Body of pancreas (tissue), 4 donors: ENCODE measurements at regions of chr7 and their contacts with region 1.

Region 1: GRCh38 chr7:26365077-26365900 is 73.6 kb downstream of the SNX10 start:
- DNase-seq: peak; percentile 47 to 78 (median 56)
- ATAC-seq: peak; percentile 72
- H3K4me3 ChIP-seq: no peak overlapping the region
- H3K27ac ChIP-seq: peak overlapping the region; percentile 34 to 82 (median 56)
- H3K4me1 ChIP-seq: peaks cover 47% of the 10 kb centered on the region
- H3K27me3 ChIP-seq: no peaks in the 10 kb centered on the region
- CTCF ChIP-seq: peak; percentile 43 to 96 (median 93)
- POLR2A ChIP-seq: no peak

Region 2: DNA sequence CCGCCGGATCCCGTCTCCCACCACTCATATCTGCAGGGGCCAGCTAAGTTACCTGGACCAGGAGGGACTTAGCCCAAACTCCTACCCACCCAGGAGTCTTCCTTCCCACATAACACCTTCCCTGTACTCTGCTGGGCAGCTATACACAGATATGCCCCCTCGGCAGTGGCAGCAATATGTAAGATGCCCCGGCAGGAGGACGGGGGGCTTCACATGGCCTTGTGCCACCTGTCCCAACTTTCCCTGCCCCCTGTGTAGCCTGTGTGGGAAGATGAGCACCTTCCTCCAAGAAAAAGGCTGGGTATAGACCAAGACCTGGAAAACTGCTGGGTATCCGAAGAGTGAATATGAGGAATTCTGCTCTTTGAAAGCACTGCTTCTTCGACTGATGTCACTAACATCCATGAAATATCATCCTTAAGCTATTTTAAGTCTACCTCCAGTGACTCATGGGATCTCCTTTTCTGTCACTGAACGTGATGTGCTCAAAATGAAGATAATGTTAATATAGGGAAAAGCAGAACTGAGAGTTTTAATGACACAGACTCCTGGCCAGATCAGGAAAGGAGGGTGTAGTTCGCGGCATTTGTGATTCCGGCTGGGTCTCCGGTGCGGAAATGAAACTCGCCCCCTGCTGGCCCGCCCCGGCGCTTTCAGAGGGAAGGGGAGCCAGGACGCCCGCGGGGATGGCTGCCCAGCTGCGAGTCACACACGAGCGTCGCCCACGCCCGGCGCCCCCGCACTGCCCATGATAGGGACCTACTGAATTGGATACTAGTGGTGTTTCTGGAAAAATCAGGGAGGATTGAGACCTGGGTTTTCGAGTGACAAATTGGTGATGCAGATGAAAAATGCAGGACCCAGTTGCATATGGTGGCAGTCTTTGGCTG is 470.1 kb before region 1 on chr7:
- intact Hi-C with region 1: loop called (anchors 5 kb)
- DNase-seq: peak; percentile 72 to 83 (median 78)
- ATAC-seq: peak; percentile 76
- H3K4me3 ChIP-seq: no peak overlapping the region
- H3K27ac ChIP-seq: peak overlapping the region; percentile 29 to 60 (median 40)
- H3K4me1 ChIP-seq: peaks cover 42% of the 10 kb centered on the region
- H3K27me3 ChIP-seq: no peaks in the 10 kb centered on the region
- CTCF ChIP-seq: peak; percentile 57 to 78 (median 71)
- POLR2A ChIP-seq: peak in 2 of 3 donors; percentile 26 to 52

Region 3: DNA sequence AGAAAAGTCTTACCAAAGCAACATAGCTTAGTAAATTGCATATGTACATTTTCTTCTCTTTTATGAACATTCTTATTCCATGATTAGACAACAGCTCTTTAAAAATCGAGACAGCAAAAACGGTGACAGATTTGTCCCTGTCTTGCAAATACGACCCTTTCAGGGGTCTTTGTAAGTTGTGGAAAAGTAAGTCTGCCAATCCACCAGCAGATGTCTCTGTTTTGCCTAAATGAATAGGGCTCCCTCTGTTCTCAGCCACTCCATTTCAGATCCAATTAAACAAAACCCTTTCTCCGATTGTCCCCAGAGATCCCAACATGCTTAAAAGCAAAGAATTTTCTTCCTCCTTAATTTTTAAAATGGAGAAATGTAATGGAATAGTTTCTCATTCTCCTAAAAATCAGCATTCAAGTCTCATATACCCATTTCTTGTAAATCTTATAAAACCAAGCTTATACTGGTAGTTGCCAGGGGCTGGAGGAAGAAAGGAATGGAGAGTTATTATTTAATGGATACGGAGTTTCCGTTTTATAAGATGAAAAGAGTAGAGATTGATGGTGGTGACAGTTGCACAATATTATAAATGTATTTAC is 274.3 kb before region 1 on chr7:
- intact Hi-C with region 1: loop called (anchors 10 kb)
- DNase-seq: peak in 1 of 4 donors; percentile 32
- ATAC-seq: peak; percentile 68
- H3K4me3 ChIP-seq: no peak overlapping the region
- H3K27ac ChIP-seq: no peak overlapping the region
- H3K4me1 ChIP-seq: peaks cover 8% of the 10 kb centered on the region
- H3K27me3 ChIP-seq: no peaks in the 10 kb centered on the region
- CTCF ChIP-seq: peak; percentile 25 to 82 (median 63)
- POLR2A ChIP-seq: no peak

Region 4: GRCh38 chr7:26156454-26157365 is 208.6 kb before region 1 on chr7:
- intact Hi-C with region 1: no loop called
- DNase-seq: no peak
- ATAC-seq: peak; percentile 39
- H3K4me3 ChIP-seq: no peak overlapping the region
- H3K27ac ChIP-seq: peak overlapping the region; percentile 7 to 76 (median 62)
- H3K4me1 ChIP-seq: peaks cover 42% of the 10 kb centered on the region
- H3K27me3 ChIP-seq: no peaks in the 10 kb centered on the region
- CTCF ChIP-seq: no peak
- POLR2A ChIP-seq: no peak

Region 5: GRCh38 chr7:26667500-26668133 is 302.3 kb after region 1 on chr7:
- intact Hi-C with region 1: loop called (anchors 5 kb)
- DNase-seq: peak; percentile 72 to 90 (median 80)
- ATAC-seq: peak; percentile 92
- H3K4me3 ChIP-seq: no peak overlapping the region
- H3K27ac ChIP-seq: no peak overlapping the region
- H3K4me1 ChIP-seq: no peaks in the 10 kb centered on the region
- H3K27me3 ChIP-seq: no peaks in the 10 kb centered on the region
- CTCF ChIP-seq: peak; percentile 59 to 97 (median 93)
- POLR2A ChIP-seq: no peak